ENCODE measurements at regions of chr5 and their contacts with region 1.

Region 1: GRCh38 chr5:54646356-54647101 is 129.0 kb downstream of the SNX18 start:
- DNase-seq: peak; percentile 83
- ATAC-seq: peak; percentile 91 to 96 (median 93)
- H3K4me3 ChIP-seq: peak overlapping the region in 4 of 10 donors; percentile 10 to 24 (median 21)
- H3K27ac ChIP-seq: peak overlapping the region; percentile 5 to 87 (median 70)
- H3K4me1 ChIP-seq: peaks cover 15 to 51% (median 35%) of the 10 kb centered on the region in 9 donors
- H3K27me3 ChIP-seq: no peaks in the 10 kb centered on the region
- CTCF ChIP-seq: no peak

Region 2: DNA sequence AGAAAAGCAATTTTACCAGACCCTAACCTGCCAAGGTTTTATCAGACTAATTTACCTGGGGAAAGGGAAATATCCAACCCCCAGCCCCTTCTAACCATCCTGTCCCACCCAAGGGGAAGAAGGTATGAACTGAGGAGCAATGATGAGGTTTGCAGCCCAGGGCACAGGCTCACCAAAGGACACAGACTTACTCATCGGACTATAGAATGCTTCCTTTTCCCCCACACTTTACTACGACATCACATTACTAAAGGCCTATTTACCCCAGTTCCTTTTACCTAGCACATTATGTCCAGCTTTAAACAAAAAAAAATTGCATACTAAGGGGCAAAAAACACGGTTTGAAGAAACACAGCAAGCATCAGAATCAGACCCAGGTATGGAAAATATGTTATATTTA is 1260.2 kb before region 1 on chr5:
- intact Hi-C with region 1: no loop called
- DNase-seq: no peak
- ATAC-seq: no peak
- H3K4me3 ChIP-seq: no peak overlapping the region
- H3K27ac ChIP-seq: no peak overlapping the region
- H3K4me1 ChIP-seq: no peaks in the 10 kb centered on the region
- H3K27me3 ChIP-seq: peaks cover 0 to 2% (median 0%) of the 10 kb centered on the region in 7 donors
- CTCF ChIP-seq: no peak

Region 3: DNA sequence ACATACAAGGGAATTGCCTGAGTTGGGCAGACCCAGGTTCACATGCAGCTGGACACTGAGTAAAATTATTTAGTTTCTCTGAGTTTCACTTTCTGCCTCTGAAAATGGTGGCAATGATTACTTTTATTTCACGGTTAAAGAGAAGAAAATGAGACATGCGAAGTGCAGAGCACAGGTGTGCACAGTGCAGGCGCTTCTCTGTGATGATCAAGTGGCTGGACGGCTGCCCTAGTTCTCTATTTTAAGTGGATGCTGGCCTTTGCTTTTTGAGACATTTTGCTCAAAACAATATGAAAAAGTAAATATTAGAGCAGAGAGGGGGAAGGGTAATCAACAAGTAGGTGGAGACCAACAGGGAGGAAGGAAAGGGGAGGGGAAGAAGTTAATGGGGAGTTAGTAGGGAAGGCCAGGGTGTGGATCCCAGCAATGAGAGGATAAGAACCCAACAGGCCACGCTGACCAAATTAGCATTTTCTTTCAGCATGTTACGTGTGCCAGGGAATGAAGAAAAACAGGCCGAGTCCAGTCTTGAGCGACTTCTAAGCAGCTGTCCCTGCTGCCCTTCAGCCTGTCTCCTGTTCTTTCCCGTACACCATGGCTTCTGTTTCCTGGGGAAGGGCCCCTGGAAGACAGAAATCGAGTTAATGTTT is 112.9 kb before region 1 on chr5:
- intact Hi-C with region 1: loop called in 1 of 10 experiments (anchors 10 kb)
- DNase-seq: peak in 1 of 2 donors; percentile 56
- ATAC-seq: peak; percentile 59 to 85 (median 78)
- H3K4me3 ChIP-seq: peak overlapping the region in 4 of 10 donors; percentile 8 to 20 (median 14)
- H3K27ac ChIP-seq: peak overlapping the region; percentile 73 to 89 (median 78)
- H3K4me1 ChIP-seq: peaks cover 21 to 93% (median 79%) of the 10 kb centered on the region in 9 donors
- H3K27me3 ChIP-seq: no peaks in the 10 kb centered on the region
- CTCF ChIP-seq: no peak